Activated CD4-positive, alpha-beta T cell treated with anti-CD3 and anti-CD28 coated beads for 36 hours (primary cell): ENCODE measurements at regions of chr2 and their contacts with region 1.

Region 1: DNA sequence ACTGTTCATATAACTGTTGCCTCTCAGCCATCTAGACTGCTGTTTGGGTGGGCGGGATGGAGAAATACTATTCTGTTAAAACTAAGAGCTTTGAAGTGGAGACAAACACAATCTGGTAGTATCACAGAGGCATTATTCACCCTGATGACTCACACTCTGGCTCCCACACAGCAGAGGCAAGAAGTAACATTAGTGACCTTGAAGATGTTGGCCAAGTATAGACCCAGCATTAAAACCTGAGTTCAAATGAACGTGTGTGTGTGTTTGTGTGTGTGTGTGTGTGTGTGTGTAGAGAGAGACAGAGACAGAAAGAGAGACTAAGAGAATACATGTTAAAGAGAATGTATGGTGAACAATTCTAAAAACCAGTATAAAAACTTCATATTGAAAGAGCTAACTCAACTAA is 22.5 kb upstream of the ACVR1 start:
- DNase-seq: peak; percentile 86
- ATAC-seq: peak; percentile 73
- H3K4me3 Mint-ChIP-seq: peak overlapping the region; percentile 69
- H3K27ac Mint-ChIP-seq: peak overlapping the region; percentile 100
- H3K4me1 Mint-ChIP-seq: peaks cover 83% of the 10 kb centered on the region
- H3K27me3 Mint-ChIP-seq: no peaks in the 10 kb centered on the region

Region 2: GRCh38 chr2:156341452-156342253 is 1556.9 kb before region 1 on chr2:
- CTCF ChIA-PET with region 1: no interaction called
- POLR2A ChIA-PET with region 1: no interaction called
- intact Hi-C with region 1: loop called in 1 of 2 experiments (anchors 5 kb)
- DNase-seq: peak; percentile 94
- ATAC-seq: peak; percentile 79
- H3K4me3 Mint-ChIP-seq: peak overlapping the region; percentile 84
- H3K27ac Mint-ChIP-seq: peak overlapping the region; percentile 95
- H3K4me1 Mint-ChIP-seq: peaks cover 53% of the 10 kb centered on the region
- H3K27me3 Mint-ChIP-seq: no peaks in the 10 kb centered on the region

Region 3: GRCh38 chr2:157336137-157337010 is 562.2 kb before region 1 on chr2:
- CTCF ChIA-PET with region 1: no interaction called
- POLR2A ChIA-PET with region 1: interaction called, 3 read pairs
- intact Hi-C with region 1: loop called (anchors 5 kb)
- DNase-seq: peak; percentile 60
- ATAC-seq: no peak
- H3K4me3 Mint-ChIP-seq: peak overlapping the region; percentile 37
- H3K27ac Mint-ChIP-seq: no peak overlapping the region
- H3K4me1 Mint-ChIP-seq: peaks cover 70% of the 10 kb centered on the region
- H3K27me3 Mint-ChIP-seq: no peaks in the 10 kb centered on the region

Region 4: GRCh38 chr2:157468931-157469708 is 429.5 kb before region 1 on chr2:
- CTCF ChIA-PET with region 1: interaction called, 3 read pairs
- POLR2A ChIA-PET with region 1: interaction called, 4 read pairs
- intact Hi-C with region 1: loop called (anchors 2 to 5 kb)
- DNase-seq: no peak
- ATAC-seq: peak; percentile 67
- H3K4me3 Mint-ChIP-seq: peak overlapping the region; percentile 68
- H3K27ac Mint-ChIP-seq: peak overlapping the region; percentile 94
- H3K4me1 Mint-ChIP-seq: peaks cover 95% of the 10 kb centered on the region
- H3K27me3 Mint-ChIP-seq: no peaks in the 10 kb centered on the region

Region 5: GRCh38 chr2:157784169-157784822 is 114.3 kb before region 1 on chr2:
- CTCF ChIA-PET with region 1: interaction called, 5 read pairs
- POLR2A ChIA-PET with region 1: no interaction called
- intact Hi-C with region 1: loop called (anchors 5 kb)
- DNase-seq: peak; percentile 42
- ATAC-seq: peak; percentile 71
- H3K4me3 Mint-ChIP-seq: no peak overlapping the region
- H3K27ac Mint-ChIP-seq: peak overlapping the region; percentile 51
- H3K4me1 Mint-ChIP-seq: peaks cover 49% of the 10 kb centered on the region
- H3K27me3 Mint-ChIP-seq: no peaks in the 10 kb centered on the region

Region 6: GRCh38 chr2:157876066-157876787 is 22.4 kb before region 1 on chr2 and contains the start of gene ACVR1:
- CTCF ChIA-PET with region 1: interaction called, 30 read pairs
- POLR2A ChIA-PET with region 1: interaction called, 29 read pairs
- intact Hi-C with region 1: loop called (anchors 1 kb)
- DNase-seq: peak; percentile 93
- ATAC-seq: peak; percentile 90
- H3K4me3 Mint-ChIP-seq: peak within 1 kb of the TSS; percentile 89
- H3K27ac Mint-ChIP-seq: peak within 1 kb of the TSS; percentile 91
- H3K4me1 Mint-ChIP-seq: peaks cover 55% of the 10 kb centered on the region
- H3K27me3 Mint-ChIP-seq: no peaks in the 10 kb centered on the region
- total RNA-seq, gene ACVR1: 17.1 to 23.0 TPM

Region 7: GRCh38 chr2:158266111-158266510 is 367.5 kb after region 1 on chr2:
- CTCF ChIA-PET with region 1: no interaction called
- POLR2A ChIA-PET with region 1: no interaction called
- intact Hi-C with region 1: no loop called
- DNase-seq: no peak
- ATAC-seq: no peak
- H3K4me3 Mint-ChIP-seq: no peak overlapping the region
- H3K27ac Mint-ChIP-seq: no peak overlapping the region
- H3K4me1 Mint-ChIP-seq: no peaks in the 10 kb centered on the region
- H3K27me3 Mint-ChIP-seq: peaks cover 17% of the 10 kb centered on the region

Region 8: DNA sequence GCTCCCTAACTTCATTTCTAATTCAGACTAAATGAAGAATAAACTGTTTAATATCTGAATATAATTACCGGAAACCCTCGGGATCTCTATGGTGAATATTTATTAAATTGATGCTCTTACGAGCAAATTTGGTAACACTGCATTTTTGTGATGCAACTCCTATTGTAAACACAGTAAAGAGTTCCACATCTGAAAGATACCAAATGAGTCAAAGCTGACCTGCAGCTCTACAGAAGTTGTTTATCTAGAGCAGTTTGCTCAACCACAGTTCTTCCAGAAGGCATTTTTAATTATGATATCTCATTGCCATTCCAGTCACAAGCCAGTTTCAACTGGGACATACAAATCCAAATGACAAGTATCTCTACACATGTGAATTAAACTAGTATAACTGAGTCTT is 687.9 kb after region 1 on chr2:
- CTCF ChIA-PET with region 1: no interaction called
- POLR2A ChIA-PET with region 1: no interaction called
- intact Hi-C with region 1: no loop called
- DNase-seq: no peak
- ATAC-seq: no peak
- H3K4me3 Mint-ChIP-seq: no peak overlapping the region
- H3K27ac Mint-ChIP-seq: no peak overlapping the region
- H3K4me1 Mint-ChIP-seq: no peaks in the 10 kb centered on the region
- H3K27me3 Mint-ChIP-seq: no peaks in the 10 kb centered on the region

Region 9: DNA sequence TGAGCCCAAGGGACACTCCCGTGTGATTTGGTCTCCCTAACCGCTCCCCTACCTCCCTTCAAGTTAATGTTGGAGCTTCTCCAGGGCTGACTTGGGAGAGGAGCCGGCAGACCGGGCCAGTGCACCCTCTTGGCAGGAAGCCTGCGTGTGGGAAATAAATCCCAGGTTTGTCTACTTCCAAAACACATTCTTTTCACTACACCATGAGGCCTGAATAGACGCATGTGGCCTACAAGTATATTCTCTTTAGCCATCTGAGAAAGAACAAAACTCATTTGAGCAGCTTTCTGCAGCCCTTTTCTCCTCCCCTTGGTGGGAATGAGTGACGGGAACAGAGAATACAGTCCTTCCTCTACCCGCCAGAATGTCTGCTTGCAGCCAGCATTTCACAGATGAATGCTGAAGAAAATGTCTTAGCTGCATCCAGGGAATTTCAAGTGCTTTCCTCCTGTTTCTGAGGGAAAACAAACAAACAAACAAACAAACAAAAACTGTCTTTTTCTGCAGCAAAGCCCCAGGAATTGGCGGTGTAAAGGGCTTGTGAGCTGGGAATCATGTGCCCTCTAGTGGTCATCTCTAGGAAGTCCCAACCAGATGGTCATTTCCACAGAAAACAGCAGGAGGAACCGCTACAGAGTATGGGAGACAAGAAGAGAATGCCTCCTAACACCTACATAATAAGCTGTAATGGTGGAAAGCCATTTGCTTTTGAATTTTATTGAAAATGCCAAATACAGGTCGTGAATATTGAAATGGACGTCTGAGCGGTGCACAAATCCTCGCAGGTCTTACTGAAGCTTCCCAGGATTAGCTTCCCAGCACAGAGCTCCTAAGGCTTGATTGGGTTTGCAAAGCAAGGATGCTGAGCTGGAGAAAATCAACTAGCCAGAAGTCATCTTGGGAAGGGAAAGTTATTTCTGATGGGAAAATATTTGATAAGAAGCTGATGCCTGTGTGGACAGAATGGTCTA is 855.3 kb after region 1 on chr2:
- CTCF ChIA-PET with region 1: no interaction called
- POLR2A ChIA-PET with region 1: no interaction called
- intact Hi-C with region 1: no loop called
- DNase-seq: peak; percentile 44
- ATAC-seq: peak; percentile 63
- H3K4me3 Mint-ChIP-seq: no peak overlapping the region
- H3K27ac Mint-ChIP-seq: no peak overlapping the region
- H3K4me1 Mint-ChIP-seq: peaks cover 3% of the 10 kb centered on the region
- H3K27me3 Mint-ChIP-seq: peaks cover 11% of the 10 kb centered on the region